Activated T-helper 1 cell treated with anti-CD3 and anti-CD28 coated beads, Interleukin-12 subunit alpha, Interleukin-12 subunit beta, Interleukin-2, Interleukin-4 antibody, amounts not matched to agents 30 ng/mL and 10 ng/mL and 1 ng/mL, durations not matched to agents 14 hours and 24 hours and 36 hours (primary cell): ENCODE measurements at regions of chr1 and their contacts with region 1.

Region 1: GRCh38 chr1:12518931-12519692 is 98.9 kb downstream of the DHRS3 start:
- DNase-seq: peak; percentile 21
- H3K4me3 Mint-ChIP-seq: no peak overlapping the region
- H3K27ac Mint-ChIP-seq: peak overlapping the region; percentile 73
- H3K4me1 Mint-ChIP-seq: peaks cover 38% of the 10 kb centered on the region
- H3K27me3 Mint-ChIP-seq: no peaks in the 10 kb centered on the region

Region 2: GRCh38 chr1:12244078-12244477 is 275.0 kb before region 1 on chr1:
- intact Hi-C with region 1: no loop called
- DNase-seq: no peak
- H3K4me3 Mint-ChIP-seq: no peak overlapping the region
- H3K27ac Mint-ChIP-seq: no peak overlapping the region
- H3K4me1 Mint-ChIP-seq: peaks cover 6% of the 10 kb centered on the region
- H3K27me3 Mint-ChIP-seq: no peaks in the 10 kb centered on the region

Region 3: GRCh38 chr1:12296623-12297022 is 222.5 kb before region 1 on chr1:
- intact Hi-C with region 1: loop called (anchors 1 kb)
- DNase-seq: no peak
- H3K4me3 Mint-ChIP-seq: peak overlapping the region; percentile 50
- H3K27ac Mint-ChIP-seq: peak overlapping the region; percentile 72
- H3K4me1 Mint-ChIP-seq: peaks cover 46% of the 10 kb centered on the region
- H3K27me3 Mint-ChIP-seq: no peaks in the 10 kb centered on the region

Region 4: GRCh38 chr1:12460911-12461621 is 58.0 kb before region 1 on chr1:
- intact Hi-C with region 1: no loop called
- DNase-seq: no peak
- H3K4me3 Mint-ChIP-seq: no peak overlapping the region
- H3K27ac Mint-ChIP-seq: no peak overlapping the region
- H3K4me1 Mint-ChIP-seq: peaks cover 23% of the 10 kb centered on the region
- H3K27me3 Mint-ChIP-seq: no peaks in the 10 kb centered on the region

Region 5: DNA sequence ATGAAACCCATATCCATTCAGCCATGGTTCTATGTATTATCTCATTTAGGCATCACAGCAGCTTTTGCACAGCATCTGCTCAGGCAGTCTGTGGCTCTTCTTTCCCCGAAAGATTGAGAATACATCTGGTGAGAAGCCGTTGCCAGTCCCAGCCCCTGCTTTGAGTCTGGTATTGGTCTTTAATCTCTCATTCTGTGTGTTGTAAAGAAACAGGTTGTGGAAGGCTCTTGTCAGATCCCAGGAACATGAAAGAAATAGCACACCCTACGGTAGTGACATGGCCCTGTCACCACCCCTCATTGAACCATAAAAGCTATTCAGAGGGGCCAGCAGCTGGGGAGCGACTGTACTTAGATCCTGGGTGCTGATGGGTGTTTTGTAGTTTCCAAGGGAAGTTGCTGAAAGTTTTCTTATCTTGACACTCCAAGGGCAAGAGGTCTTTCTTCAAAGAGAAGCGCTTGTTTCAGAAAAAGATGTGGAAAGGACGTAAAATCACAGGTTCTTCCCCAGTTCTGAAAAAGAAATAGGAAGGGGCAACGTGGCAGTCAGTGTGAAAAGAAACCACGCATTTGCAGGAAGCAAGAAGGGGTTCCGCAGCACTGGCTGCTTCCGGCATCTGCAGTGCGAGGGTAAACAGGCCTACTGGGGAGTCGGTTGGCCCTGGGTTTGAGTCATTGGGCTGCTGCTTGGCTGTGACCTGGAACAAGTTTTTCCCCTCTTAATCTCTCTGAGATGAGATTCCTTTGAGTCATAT is 46.1 kb before region 1 on chr1:
- intact Hi-C with region 1: loop called (anchors 1 kb)
- DNase-seq: peak; percentile 64
- H3K4me3 Mint-ChIP-seq: peak overlapping the region; percentile 69
- H3K27ac Mint-ChIP-seq: peak overlapping the region; percentile 93
- H3K4me1 Mint-ChIP-seq: peaks cover 82% of the 10 kb centered on the region
- H3K27me3 Mint-ChIP-seq: no peaks in the 10 kb centered on the region